H1 (cell line): ENCODE measurements at regions of chr9 and their contacts with region 1.

Region 1: DNA sequence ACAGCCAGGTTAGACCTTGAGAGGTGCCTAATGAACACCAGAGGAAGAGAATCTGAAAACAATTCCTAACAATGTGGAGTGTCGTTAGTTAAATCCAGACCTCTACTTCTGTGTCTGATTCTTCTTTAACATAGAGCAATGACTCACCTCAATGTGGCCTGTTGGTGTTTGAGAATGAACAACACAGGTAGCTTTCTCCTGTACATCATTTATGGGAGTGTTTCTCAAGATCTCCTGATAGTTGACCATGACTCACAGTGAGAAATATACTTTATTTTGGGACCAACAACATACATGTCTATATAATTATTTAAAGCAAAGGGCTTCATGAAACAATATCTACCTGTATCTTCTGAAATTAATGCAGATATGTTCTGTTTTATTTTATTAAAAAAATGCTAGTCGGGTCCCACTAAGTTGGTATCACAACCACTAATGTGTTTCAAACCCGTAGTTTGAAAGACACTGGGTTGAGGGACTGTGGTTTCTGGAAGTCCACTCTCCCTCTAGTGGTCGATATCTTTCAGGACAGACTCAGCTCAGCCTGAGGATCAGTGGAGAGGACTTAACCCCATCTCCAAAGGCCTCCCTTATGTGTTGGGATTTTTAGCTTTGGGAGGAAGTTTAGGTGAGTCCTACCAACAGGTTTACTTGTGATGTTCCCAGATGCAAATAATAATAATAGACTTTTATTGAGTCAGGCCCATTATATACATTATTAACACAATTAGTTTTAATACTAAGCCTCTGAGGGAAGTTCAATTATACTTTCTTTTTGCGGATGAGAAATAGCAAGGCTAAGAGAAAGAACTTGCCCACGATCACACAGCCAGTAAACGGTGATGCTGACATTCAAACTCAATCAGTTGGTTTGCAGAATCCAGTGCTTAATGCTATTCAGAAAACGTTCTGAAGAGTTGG is 70.0 kb upstream of the KLF9 start:
- DNase-seq: peak in 1 of 2 experiments; percentile 5
- H3K4me3 ChIP-seq: no peak overlapping the region
- H3K27ac ChIP-seq: no peak overlapping the region
- H3K4me1 ChIP-seq: peaks cover 2 to 14% (median 8%) of the 10 kb centered on the region in 4 experiments
- H3K27me3 ChIP-seq: no peaks in the 10 kb centered on the region
- CTCF ChIP-seq: peak; percentile 42 to 84 (median 70)
- EP300 ChIP-seq: no peak
- POLR2A ChIP-seq: no peak
- RAD21 ChIP-seq: peak; percentile 73 to 83

Region 2: GRCh38 chr9:70398145-70398556 is 86.3 kb before region 1 on chr9:
- CTCF ChIA-PET with region 1: no interaction called
- POLR2A ChIA-PET with region 1: no interaction called
- DNase-seq: no peak
- H3K4me3 ChIP-seq: no peak overlapping the region
- H3K27ac ChIP-seq: no peak overlapping the region
- H3K4me1 ChIP-seq: no peaks in the 10 kb centered on the region
- H3K27me3 ChIP-seq: 0 out of 7 replicates have a peak, but pooled peaks cover 0 to 3% (median 0%) of the 10 kb centered on the region in 4 experiments
- CTCF ChIP-seq: no peak
- EP300 ChIP-seq: no peak
- POLR2A ChIP-seq: no peak
- RAD21 ChIP-seq: no peak

Region 3: DNA sequence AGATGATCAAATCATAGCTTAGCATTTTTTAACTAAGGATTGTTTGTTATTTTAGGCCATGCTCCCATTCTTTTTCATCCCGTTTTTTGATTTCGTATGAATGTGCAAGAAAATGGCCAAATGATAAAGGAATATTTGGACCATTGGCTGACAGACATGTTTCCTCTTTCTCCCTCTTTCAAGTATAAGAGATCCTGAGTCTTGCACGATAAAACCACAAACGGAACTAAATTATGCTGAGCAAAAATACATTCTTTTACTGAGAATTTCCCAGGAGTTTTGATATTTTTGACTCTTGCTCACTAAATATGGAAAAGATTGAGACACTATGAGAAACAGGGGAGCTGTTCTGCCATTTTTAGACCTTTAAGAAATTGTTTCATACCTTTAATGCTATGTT is 20.4 kb after region 1 on chr9:
- CTCF ChIA-PET with region 1: interaction called, 43 read pairs
- POLR2A ChIA-PET with region 1: interaction called, 3 read pairs
- DNase-seq: no peak
- H3K4me3 ChIP-seq: no peak overlapping the region
- H3K27ac ChIP-seq: no peak overlapping the region
- H3K4me1 ChIP-seq: no peaks in the 10 kb centered on the region
- H3K27me3 ChIP-seq: no peaks in the 10 kb centered on the region
- CTCF ChIP-seq: no peak
- EP300 ChIP-seq: no peak
- POLR2A ChIP-seq: no peak
- RAD21 ChIP-seq: no peak